ENCODE measurements at regions of chr5 and their contacts with region 1.

Region 1: DNA sequence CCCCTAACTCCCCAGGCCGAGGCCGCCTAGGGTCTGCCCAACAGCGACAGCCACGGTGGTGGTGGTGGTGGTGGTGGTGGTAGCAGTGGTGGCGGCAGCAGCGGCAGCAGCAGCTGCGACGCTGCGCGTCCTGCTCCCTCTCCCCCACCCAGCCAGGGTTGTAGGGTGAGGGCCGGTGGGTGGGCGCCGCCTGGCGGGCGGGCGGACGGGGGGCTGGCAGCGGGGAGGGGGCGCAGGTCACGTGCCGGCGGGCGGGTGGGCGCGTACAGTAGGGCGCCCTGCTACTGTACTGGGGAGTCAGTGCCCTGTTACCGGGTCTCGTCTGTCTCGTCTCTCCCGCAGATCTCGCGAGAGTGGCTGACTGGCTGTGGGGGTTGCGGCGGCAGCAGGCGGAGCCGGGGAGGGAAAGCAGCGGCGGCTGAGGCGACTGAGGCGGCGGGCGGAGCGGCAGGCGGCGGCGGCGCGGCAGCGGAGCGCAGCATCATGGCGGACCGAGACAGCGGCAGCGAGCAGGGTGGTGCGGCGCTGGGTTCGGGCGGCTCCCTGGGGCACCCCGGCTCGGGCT is at the start of gene PURA:
- DNase-seq: peak; percentile 95 to 97
- H3K4me3 ChIP-seq: peak within 1 kb of the TSS; percentile 60 to 79 (median 60)
- H3K27ac ChIP-seq: peak within 1 kb of the TSS; percentile 91 to 94 (median 92)
- H3K4me1 ChIP-seq: peaks cover 41 to 50% of the 10 kb centered on the region in 2 donors
- H3K27me3 ChIP-seq: no peaks in the 10 kb centered on the region
- CTCF ChIP-seq: peak in 2 of 6 experiments; percentile 16 to 23
- POLR2A ChIP-seq: peak; percentile 60 to 91
- total RNA-seq, gene PURA: 37.4 to 60.5 (median 44.7) TPM

Region 2: DNA sequence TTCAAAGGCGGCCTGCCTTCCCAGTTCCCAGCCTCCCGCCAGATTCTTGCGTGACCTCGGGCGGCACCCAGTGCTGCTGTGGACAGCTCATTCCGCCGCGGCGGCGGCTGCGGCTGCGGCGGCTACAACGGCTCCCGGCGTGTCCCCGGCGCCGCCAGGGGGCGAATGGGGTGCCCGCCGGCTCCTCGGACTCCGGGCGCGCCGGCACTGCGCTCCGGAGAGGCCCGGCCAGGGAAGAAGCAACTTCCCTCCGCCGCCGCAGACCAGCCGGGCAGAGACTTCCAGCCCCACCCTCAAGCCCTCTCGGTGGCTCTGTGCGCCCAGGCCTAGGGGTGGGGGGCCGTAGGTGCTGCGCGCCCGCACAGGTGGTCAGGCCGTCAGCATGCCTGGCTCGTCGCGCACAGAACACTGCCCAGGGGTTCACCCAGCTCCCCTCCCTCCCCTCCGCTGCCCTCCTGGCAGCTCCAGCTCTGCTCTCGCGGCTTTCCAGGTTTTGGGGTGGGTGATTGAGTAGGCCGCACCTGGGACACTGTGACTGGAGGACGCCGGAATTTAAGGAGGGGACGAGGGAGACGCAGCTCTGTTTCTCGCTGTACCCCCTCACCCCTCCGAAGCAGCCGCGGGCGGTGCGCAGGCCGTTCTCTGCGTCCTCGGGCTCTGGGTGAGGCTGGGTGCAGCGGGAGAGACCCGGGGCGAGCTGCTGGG is 32.2 kb after region 1 on chr5:
- intact Hi-C with region 1: loop called (anchors 5 kb)
- DNase-seq: peak; percentile 73 to 80
- H3K4me3 ChIP-seq: peak overlapping the region in 1 of 3 donors; percentile 17
- H3K27ac ChIP-seq: no peak overlapping the region
- H3K4me1 ChIP-seq: peaks cover 21 to 30% of the 10 kb centered on the region in 2 donors
- H3K27me3 ChIP-seq: no peaks in the 10 kb centered on the region
- CTCF ChIP-seq: peak; percentile 18 to 92 (median 68)
- POLR2A ChIP-seq: no peak

Region 3: DNA sequence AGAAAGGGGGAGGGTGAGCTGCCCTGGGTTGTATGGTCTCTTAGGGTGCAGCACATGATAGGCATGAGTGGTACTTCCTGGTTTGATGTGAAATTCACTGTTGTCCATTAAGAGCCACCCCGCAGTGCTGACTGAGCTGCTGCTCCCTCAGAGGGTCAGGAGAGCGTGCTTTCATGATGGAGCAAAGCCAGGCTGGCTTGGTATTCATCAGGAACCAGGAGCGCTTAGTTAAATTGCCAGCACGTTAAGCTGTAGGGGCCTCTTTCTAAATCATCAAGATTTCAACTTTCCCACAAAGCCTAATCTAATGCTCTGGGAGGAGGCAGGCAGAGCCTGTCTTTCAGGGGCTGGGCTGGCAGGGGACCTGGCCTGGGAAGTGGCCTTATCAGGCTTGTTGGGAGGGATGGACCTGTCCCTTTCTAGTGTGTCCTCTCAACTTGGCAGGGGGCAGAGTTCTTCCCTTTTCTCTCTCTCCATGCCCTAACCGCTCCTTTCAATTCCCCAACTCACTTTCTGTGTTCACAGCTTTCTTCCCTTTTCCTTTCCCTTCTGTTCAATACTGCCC is 69.1 kb after region 1 on chr5:
- intact Hi-C with region 1: no loop called
- DNase-seq: peak; percentile 72 to 78
- H3K4me3 ChIP-seq: no peak overlapping the region
- H3K27ac ChIP-seq: peak overlapping the region; percentile 25 to 61 (median 54)
- H3K4me1 ChIP-seq: peaks cover 24 to 42% of the 10 kb centered on the region in 2 donors
- H3K27me3 ChIP-seq: no peaks in the 10 kb centered on the region
- CTCF ChIP-seq: no peak
- POLR2A ChIP-seq: no peak

Measured in thyroid gland (tissue), 4 donors.